PC-9 (cell line): ENCODE measurements at regions of chr12 and their contacts with region 1.

Region 1: DNA sequence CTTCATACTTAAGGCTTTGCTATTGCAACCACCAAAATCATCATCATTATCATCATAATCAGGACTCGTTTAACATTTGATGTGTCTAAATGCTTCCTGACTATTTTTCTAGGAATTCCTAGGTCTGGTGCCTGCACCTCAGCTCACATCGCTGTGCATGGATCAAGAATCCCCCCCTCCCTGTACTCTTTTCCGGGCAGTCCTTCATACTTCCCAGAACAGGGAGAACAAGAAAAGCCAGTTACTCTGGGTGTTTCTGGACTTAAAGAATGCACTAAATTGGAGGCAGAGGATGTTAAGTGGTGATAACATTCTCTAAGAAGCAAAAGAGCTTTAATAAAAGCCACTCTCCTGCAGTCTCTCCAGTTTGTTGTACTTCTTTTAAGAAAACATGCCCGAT is 9.4 kb downstream of the ERP27 start:
- DNase-seq: peak; percentile 84 to 97
- H3K4me3 ChIP-seq: peak overlapping the region; percentile 50
- H3K27ac ChIP-seq: peak overlapping the region; percentile 78
- H3K4me1 ChIP-seq: peaks cover 72% of the 10 kb centered on the region
- H3K27me3 ChIP-seq: no peaks in the 10 kb centered on the region
- CTCF ChIP-seq: no peak

Region 2: DNA sequence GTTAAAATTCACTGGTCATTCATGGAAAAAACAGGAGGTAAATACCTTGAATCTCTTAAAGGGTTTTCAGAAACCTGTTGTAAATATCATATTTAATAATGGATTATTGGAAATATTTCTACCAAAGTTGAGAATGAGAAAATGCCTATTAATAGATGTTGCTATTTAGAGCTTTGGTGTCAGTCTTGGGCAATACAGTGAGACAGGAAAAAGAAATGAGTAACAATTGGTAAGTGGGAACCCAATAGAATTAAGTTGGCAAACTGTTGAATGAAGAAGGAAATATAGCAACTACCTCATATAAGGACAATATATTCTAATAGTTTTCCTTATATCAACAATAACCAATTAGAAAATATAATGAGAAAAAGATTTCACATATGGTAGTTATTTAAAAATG is 485.4 kb before region 1 on chr12:
- CTCF ChIA-PET with region 1: no interaction called
- POLR2A ChIA-PET with region 1: no interaction called
- intact Hi-C with region 1: no loop called
- DNase-seq: no peak
- H3K4me3 ChIP-seq: no peak overlapping the region
- H3K27ac ChIP-seq: no peak overlapping the region
- H3K4me1 ChIP-seq: no peaks in the 10 kb centered on the region
- H3K27me3 ChIP-seq: no peaks in the 10 kb centered on the region
- CTCF ChIP-seq: no peak

Region 3: DNA sequence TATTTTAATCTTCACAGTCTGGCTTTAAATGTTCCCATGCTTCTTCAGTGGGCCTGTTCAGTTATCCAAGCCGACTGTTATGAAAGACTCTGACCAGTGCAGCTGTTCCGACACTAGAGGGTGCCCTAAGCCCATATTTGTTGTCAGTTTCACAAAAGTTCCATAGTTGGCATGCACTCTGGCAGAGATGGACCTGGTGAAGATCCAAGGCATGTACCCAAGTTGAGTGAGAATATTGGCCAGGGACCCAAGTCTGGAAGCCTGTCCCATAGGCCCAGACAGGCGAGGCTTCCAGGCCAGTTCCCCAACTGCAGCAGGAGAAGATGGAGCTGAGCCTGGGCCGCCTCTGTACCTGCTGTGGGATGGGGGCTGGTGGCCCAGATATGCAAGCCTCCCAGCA is 205.2 kb before region 1 on chr12:
- CTCF ChIA-PET with region 1: no interaction called
- POLR2A ChIA-PET with region 1: no interaction called
- intact Hi-C with region 1: loop called (anchors 1 kb)
- DNase-seq: peak; percentile 36 to 50
- H3K4me3 ChIP-seq: no peak overlapping the region
- H3K27ac ChIP-seq: no peak overlapping the region
- H3K4me1 ChIP-seq: no peaks in the 10 kb centered on the region
- H3K27me3 ChIP-seq: no peaks in the 10 kb centered on the region
- CTCF ChIP-seq: peak; percentile 83

Region 4: DNA sequence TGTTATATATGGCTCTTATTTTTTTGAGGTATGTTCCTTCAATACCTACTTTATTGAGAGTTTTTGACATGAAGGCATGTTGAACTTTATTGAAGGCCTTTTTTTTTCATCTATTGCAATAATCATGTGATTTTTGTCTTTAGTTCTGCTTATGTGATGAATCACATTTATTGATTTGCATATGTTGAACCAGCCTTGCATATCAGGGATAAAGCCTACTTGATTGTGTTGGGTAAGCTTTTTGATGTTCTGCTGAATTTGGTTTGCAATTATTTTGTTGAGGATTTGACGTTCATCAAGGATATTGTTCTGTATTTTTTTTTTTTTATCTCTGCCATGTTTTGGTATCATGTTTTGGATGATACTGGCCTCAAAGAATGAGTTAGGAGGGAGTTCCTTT is 70.5 kb before region 1 on chr12:
- CTCF ChIA-PET with region 1: interaction called, 5 read pairs
- POLR2A ChIA-PET with region 1: interaction called, 10 read pairs
- intact Hi-C with region 1: no loop called
- DNase-seq: no peak
- H3K4me3 ChIP-seq: no peak overlapping the region
- H3K27ac ChIP-seq: no peak overlapping the region
- H3K4me1 ChIP-seq: no peaks in the 10 kb centered on the region; the same call in 1 of the 2 replicates
- H3K27me3 ChIP-seq: no peaks in the 10 kb centered on the region
- CTCF ChIP-seq: no peak

Region 5: GRCh38 chr12:14884458-14884878 is 44.5 kb before region 1 on chr12:
- CTCF ChIA-PET with region 1: interaction called, 4 read pairs
- POLR2A ChIA-PET with region 1: interaction called, 11 read pairs
- intact Hi-C with region 1: loop called (anchors 1 kb)
- DNase-seq: peak; percentile 57 to 69
- H3K4me3 ChIP-seq: peak overlapping the region; percentile 52
- H3K27ac ChIP-seq: peak overlapping the region; percentile 59
- H3K4me1 ChIP-seq: peaks cover 48% of the 10 kb centered on the region
- H3K27me3 ChIP-seq: no peaks in the 10 kb centered on the region
- CTCF ChIP-seq: no peak

Region 6: DNA sequence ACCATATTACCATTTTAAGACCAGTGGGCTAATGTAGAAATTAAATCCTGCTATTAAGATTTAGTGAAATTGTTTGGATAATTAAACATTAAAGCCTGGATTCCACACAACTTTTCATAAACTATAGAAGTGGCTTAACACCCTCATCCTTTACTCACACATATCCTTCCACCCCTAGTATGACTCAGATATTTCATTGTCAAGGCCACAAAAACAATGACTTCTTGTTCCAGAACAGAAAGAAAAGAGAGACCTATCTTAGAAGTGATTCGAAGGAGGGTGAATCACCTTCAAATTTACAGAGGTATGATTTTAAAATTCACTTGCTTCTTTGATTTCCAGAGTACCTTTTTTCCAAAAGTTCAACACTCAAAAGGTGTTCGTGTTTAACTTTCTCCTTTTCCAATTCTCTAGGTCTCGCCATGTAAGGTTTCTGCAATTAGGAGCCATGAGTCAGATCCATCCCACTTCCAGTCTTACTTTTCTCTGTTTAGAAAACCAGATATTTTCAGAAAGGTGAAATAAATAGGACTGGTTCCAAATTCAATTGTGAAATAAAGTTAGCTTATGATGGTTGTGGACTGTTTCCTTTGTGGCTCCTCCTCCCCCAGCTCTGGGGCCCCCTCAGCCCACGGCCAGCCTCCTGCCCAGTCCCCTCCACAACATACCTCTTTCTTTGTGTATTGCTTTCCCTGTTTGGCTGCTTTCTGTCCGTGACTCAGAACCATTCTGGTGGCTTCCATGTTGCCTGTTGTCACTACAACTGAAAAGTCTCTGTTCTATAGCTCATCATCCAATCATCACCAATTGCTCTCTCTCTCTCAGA is 18.7 kb before region 1 on chr12:
- CTCF ChIA-PET with region 1: no interaction called
- POLR2A ChIA-PET with region 1: interaction called, 7 read pairs
- intact Hi-C with region 1: loop called (anchors 1 kb)
- DNase-seq: peak; percentile 12 to 52
- H3K4me3 ChIP-seq: no peak overlapping the region
- H3K27ac ChIP-seq: peak overlapping the region; percentile 54
- H3K4me1 ChIP-seq: peaks cover 32% of the 10 kb centered on the region
- H3K27me3 ChIP-seq: no peaks in the 10 kb centered on the region
- CTCF ChIP-seq: no peak

Region 7: GRCh38 chr12:14952299-14952921 is 23.4 kb after region 1 on chr12:
- CTCF ChIA-PET with region 1: no interaction called
- POLR2A ChIA-PET with region 1: interaction called, 15 read pairs
- intact Hi-C with region 1: loop called (anchors 1 kb)
- DNase-seq: peak; percentile 64 to 98
- H3K4me3 ChIP-seq: 0 out of 2 replicates have a peak overlapping the region, but pooled peaks have one; percentile 0
- H3K27ac ChIP-seq: peak overlapping the region; percentile 83
- H3K4me1 ChIP-seq: peaks cover 72% of the 10 kb centered on the region
- H3K27me3 ChIP-seq: no peaks in the 10 kb centered on the region
- CTCF ChIP-seq: no peak

Region 8: DNA sequence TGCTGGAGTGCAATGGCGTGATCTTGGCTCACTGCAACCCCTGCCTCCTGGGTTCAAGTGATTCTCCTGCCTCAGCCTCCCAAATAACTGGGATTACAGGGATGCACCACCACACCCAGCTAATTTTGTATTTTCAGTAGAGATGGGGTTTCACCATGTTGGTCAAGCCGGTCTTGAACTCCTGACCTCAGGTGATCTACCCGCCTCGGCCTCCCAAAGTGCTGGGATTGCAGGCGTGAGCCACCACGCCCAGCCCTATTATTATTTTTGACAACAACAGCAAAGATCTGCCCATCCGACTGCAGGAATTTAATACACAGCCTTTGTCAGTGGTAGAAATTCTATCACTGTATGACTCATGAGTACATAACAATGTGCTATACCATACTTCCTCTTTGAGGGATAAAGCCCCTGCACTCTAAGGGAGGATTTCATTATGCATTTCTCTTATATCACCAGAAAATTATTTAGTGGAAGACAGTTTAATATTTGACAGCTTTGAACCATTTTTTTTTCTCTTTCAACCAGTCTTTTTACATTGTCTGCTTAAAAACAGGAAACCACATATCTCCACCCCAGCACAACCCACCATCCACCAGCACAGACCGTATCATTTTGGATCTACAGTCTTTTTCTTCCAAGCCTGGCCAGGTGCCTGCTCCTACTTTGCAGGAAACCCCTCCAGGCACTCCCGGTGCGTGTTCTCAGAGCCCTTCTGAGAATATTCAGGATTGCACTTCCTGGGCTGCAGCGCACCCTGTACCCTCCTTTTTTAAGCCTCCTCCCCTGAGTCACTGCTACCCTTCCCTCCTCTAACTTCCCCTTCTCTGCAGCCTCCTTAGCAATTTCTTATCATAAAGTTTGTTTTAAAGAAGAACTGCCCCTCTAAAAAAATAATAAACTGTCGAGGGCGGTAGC is 31.8 kb after region 1 on chr12:
- CTCF ChIA-PET with region 1: no interaction called
- POLR2A ChIA-PET with region 1: interaction called, 4 read pairs
- intact Hi-C with region 1: loop called (anchors 1 kb)
- DNase-seq: peak; percentile 84 to 85
- H3K4me3 ChIP-seq: peak overlapping the region; percentile 54
- H3K27ac ChIP-seq: peak overlapping the region; percentile 83
- H3K4me1 ChIP-seq: peaks cover 53% of the 10 kb centered on the region
- H3K27me3 ChIP-seq: no peaks in the 10 kb centered on the region
- CTCF ChIP-seq: no peak